ENCODE measurements at regions of chr6 and their contacts with region 1.

Region 1: DNA sequence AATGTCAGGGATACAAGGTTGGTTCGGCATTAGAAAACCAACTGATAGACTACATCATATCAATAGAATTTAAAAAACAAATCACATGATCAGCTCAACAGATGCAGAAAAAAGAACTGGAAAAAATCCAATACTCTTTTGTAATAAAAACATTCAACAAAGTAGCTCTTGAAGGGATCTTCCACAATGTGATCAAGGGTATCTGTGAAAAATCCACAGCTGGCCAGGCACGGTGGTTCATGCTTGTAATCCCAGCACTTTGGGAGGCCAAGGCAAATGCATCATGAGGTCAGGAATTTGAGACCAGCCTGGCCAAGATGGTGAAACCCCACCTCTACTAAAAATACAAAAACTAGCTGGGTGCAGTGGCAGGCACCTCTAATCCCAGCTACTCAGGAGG is 63.1 kb downstream of the ASCC3 start:
- DNase-seq: no peak
- ATAC-seq: no peak
- H3K4me3 ChIP-seq: no peak overlapping the region
- H3K4me3 Mint-ChIP-seq: no peak overlapping the region
- H3K27ac ChIP-seq: no peak overlapping the region
- H3K27ac Mint-ChIP-seq: no peak overlapping the region
- H3K4me1 ChIP-seq: no peaks in the 10 kb centered on the region
- H3K4me1 Mint-ChIP-seq: peaks cover 44 to 45% (median 45%) of the 10 kb centered on the region in 3 donors
- H3K27me3 ChIP-seq: no peaks in the 10 kb centered on the region
- H3K27me3 Mint-ChIP-seq: no peaks in the 10 kb centered on the region

Region 2: GRCh38 chr6:100780678-100781077 is 37.4 kb before region 1 on chr6:
- CTCF ChIA-PET with region 1: no interaction called
- POLR2A ChIA-PET with region 1: no interaction called
- DNase-seq: no peak
- ATAC-seq: no peak
- H3K4me3 ChIP-seq: no peak overlapping the region
- H3K4me3 Mint-ChIP-seq: no peak overlapping the region
- H3K27ac ChIP-seq: no peak overlapping the region
- H3K27ac Mint-ChIP-seq: no peak overlapping the region
- H3K4me1 ChIP-seq: no peaks in the 10 kb centered on the region
- H3K4me1 Mint-ChIP-seq: no peaks in the 10 kb centered on the region
- H3K27me3 ChIP-seq: no peaks in the 10 kb centered on the region
- H3K27me3 Mint-ChIP-seq: no peaks in the 10 kb centered on the region

Region 3: DNA sequence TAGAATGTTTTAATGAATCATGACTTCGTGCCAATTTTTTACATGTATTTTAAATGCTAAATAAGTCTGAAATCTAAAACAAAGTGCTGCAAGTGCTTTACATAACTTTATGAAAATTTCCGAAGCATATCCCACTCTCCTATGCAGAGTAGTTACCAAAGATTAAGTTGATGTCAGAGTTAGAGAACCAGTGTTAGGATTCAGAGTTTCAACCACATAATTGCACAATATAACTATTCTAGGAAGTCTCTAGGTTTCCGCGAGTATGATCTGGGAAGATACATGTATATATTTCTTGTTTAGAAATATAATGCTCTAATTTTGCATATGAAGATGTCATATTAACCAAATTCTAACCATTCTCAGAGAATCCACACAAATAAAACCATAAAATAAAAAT is 11.8 kb before region 1 on chr6:
- CTCF ChIA-PET with region 1: interaction called, 7 to 10 read pairs
- POLR2A ChIA-PET with region 1: interaction called in 1 of 2 experiments, 4 read pairs
- DNase-seq: no peak
- ATAC-seq: no peak
- H3K4me3 ChIP-seq: no peak overlapping the region
- H3K4me3 Mint-ChIP-seq: no peak overlapping the region
- H3K27ac ChIP-seq: no peak overlapping the region
- H3K27ac Mint-ChIP-seq: no peak overlapping the region
- H3K4me1 ChIP-seq: no peaks in the 10 kb centered on the region
- H3K4me1 Mint-ChIP-seq: peaks cover 9 to 24% (median 22%) of the 10 kb centered on the region in 3 donors
- H3K27me3 ChIP-seq: no peaks in the 10 kb centered on the region
- H3K27me3 Mint-ChIP-seq: no peaks in the 10 kb centered on the region

Region 4: DNA sequence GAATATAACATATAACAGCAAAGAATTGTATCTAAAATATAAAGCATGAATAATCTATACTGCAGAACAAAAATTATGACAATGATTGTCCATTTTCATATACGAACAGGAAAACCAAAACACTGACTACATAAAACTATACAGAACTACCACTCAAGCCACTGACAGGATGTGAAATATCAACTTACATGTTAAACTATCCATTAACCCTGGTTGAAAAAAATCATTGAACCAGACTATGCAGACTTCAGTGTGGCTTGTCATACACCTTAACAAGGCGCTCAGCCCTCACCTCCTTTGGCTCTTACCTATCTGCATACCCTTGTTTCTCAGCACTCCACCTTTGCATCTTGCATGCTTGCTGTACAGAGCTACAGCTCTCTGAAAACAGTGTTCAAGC is 28.2 kb after region 1 on chr6:
- CTCF ChIA-PET with region 1: no interaction called
- POLR2A ChIA-PET with region 1: no interaction called
- DNase-seq: no peak
- ATAC-seq: no peak
- H3K4me3 ChIP-seq: no peak overlapping the region
- H3K4me3 Mint-ChIP-seq: no peak overlapping the region
- H3K27ac ChIP-seq: no peak overlapping the region
- H3K27ac Mint-ChIP-seq: no peak overlapping the region
- H3K4me1 ChIP-seq: no peaks in the 10 kb centered on the region
- H3K4me1 Mint-ChIP-seq: peaks cover 48 to 62% (median 56%) of the 10 kb centered on the region in 3 donors
- H3K27me3 ChIP-seq: no peaks in the 10 kb centered on the region
- H3K27me3 Mint-ChIP-seq: no peaks in the 10 kb centered on the region